ENCODE measurements at regions of chr10 and their contacts with region 1.

Region 1: GRCh38 chr10:72834183-72834825 is 59.2 kb upstream of the OIT3 start:
- DNase-seq: peak; percentile 12
- H3K4me3 Mint-ChIP-seq: no peak overlapping the region
- H3K27ac Mint-ChIP-seq: no peak overlapping the region
- H3K4me1 Mint-ChIP-seq: peaks cover 5% of the 10 kb centered on the region
- H3K27me3 Mint-ChIP-seq: no peaks in the 10 kb centered on the region

Region 2: DNA sequence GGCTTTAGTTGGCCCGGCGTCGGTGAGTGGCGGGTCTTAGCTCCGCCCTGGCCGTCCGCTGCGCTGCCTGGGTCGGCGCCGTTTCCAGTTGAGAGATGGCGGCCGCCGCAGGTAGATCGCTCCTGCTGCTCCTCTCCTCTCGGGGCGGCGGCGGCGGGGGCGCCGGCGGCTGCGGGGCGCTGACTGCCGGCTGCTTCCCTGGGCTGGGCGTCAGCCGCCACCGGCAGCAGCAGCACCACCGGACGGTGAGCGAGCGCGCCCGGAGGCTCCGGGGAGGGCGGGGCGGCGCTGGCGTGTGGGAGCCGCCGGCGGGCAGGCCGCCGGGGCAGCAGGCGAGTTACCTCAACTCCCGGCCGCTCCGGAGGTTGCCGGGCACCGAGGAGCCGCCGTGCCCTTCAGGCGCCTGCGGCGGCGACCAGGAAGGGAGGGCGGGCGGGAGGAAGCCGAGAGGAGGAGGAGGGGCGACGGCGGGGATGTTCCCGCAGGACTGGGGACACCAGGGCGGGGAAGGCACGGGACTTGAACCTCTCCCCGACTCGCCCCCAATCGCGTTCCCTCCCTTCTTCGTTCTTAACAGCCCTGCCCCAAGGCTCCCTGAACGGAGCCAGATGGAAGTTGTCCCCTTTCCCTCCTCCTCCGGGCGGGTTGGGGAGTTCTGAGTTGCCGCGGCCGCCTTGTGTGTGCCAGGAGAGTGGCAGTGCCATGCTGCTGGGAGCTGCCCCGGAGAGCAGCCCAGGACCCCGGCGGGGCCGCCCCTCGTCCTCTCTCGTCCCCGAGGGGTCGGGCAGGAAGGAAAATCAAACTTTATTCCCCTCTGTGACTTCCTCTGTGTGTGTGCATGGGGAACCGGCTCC is 142.0 kb before region 1 on chr10 and contains the start of gene MCU:
- intact Hi-C with region 1: loop called (anchors 10 kb)
- DNase-seq: peak; percentile 88
- H3K4me3 Mint-ChIP-seq: peak within 1 kb of the TSS; percentile 84
- H3K27ac Mint-ChIP-seq: peak within 1 kb of the TSS; percentile 1
- H3K4me1 Mint-ChIP-seq: peaks cover 27% of the 10 kb centered on the region
- H3K27me3 Mint-ChIP-seq: peaks cover 5% of the 10 kb centered on the region
- total RNA-seq, gene MCU: 11.6 and 13.2 TPM in 2 replicates

Region 3: DNA sequence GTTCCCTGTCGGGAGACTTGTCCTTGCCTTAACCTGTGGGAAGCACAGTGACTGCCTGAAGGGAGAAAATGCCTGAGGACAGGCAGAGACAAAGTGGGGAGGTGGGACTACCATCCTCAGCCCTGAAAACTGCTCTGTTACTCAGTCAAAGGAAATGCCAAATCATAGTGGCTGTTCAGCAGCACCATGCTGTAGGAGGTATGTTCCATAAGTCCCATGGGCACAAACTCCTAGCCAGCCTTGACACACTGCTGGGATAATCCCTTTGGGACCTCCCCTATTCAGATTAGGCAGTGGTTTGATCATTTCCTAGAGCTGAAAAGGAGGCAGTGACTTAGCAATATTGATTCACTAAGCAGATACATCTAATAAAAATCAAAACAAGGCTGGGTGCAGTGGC is 62.3 kb before region 1 on chr10:
- intact Hi-C with region 1: no loop called
- DNase-seq: no peak
- H3K4me3 Mint-ChIP-seq: no peak overlapping the region
- H3K27ac Mint-ChIP-seq: no peak overlapping the region
- H3K4me1 Mint-ChIP-seq: peaks cover 9% of the 10 kb centered on the region
- H3K27me3 Mint-ChIP-seq: no peaks in the 10 kb centered on the region

Measured in activated T-helper 2 cell treated with anti-CD3 and anti-CD28 coated beads, Interferon-gamma antibody, Interleukin-2, Interleukin-4, amounts not matched to agents 10 μg/mL and 5 μg/mL and 100 μg/mL, durations not matched to agents 14 hours and 24 hours and 36 hours (primary cell).